ENCODE measurements at regions of chr2 and their contacts with region 1.

Region 1: GRCh38 chr2:222837511-222838056 is 23.3 kb upstream of the ACSL3 start:
- DNase-seq: peak; percentile 94
- H3K4me3 Mint-ChIP-seq: peak overlapping the region; percentile 73
- H3K27ac Mint-ChIP-seq: peak overlapping the region; percentile 93
- H3K4me1 Mint-ChIP-seq: peaks cover 39% of the 10 kb centered on the region
- H3K27me3 Mint-ChIP-seq: no peaks in the 10 kb centered on the region
- CTCF ChIP-seq: no peak

Region 2: GRCh38 chr2:222805541-222806304 is 31.9 kb before region 1 on chr2:
- CTCF ChIA-PET with region 1: interaction called, 4 read pairs
- POLR2A ChIA-PET with region 1: interaction called, 56 read pairs
- intact Hi-C with region 1: loop called (anchors 5 kb)
- DNase-seq: peak; percentile 89
- H3K4me3 Mint-ChIP-seq: peak overlapping the region; percentile 39
- H3K27ac Mint-ChIP-seq: peak overlapping the region; percentile 96
- H3K4me1 Mint-ChIP-seq: peaks cover 10% of the 10 kb centered on the region
- H3K27me3 Mint-ChIP-seq: no peaks in the 10 kb centered on the region
- CTCF ChIP-seq: no peak

Region 3: DNA sequence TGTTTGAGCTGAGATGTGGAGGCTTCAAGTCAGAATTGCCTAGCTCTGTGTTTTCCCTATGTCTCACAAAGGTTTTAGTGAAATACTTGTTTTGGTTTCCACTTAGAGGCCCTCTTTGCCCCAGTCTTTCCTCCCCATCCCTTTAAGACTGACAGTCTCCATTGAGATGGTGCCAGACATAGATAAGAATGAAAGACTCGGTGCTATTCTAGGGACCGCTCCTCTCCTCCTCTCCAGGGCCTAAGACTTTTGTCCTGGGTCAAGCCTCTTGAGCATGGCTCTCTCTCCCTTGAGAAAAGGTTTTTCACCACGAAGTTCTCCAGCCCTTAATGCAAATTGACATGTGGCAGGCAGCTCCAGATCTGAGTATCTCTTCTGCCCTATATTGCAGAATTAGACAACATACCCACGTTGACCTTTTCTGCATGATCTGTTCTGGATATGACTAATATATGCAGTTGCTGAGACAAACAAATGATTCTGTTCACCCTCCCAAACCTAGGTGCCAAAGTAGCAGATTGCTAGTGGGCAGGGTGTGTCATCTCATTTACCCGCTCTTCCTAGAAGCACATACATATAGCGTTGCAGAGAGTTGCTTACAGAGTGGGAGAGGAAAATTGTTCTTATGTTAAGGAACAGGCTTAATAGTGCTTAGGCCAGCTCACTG is 24.3 kb before region 1 on chr2:
- CTCF ChIA-PET with region 1: interaction called, 4 read pairs
- POLR2A ChIA-PET with region 1: interaction called, 56 read pairs
- intact Hi-C with region 1: loop called (anchors 5 kb)
- DNase-seq: peak; percentile 71
- H3K4me3 Mint-ChIP-seq: no peak overlapping the region
- H3K27ac Mint-ChIP-seq: peak overlapping the region; percentile 70
- H3K4me1 Mint-ChIP-seq: peaks cover 31% of the 10 kb centered on the region
- H3K27me3 Mint-ChIP-seq: no peaks in the 10 kb centered on the region
- CTCF ChIP-seq: no peak

Region 4: GRCh38 chr2:222827417-222827816 is 10.2 kb before region 1 on chr2:
- CTCF ChIA-PET with region 1: interaction called, 6 read pairs
- POLR2A ChIA-PET with region 1: interaction called, 32 read pairs
- intact Hi-C with region 1: no loop called
- DNase-seq: peak; percentile 55
- H3K4me3 Mint-ChIP-seq: no peak overlapping the region
- H3K27ac Mint-ChIP-seq: no peak overlapping the region
- H3K4me1 Mint-ChIP-seq: peaks cover 20% of the 10 kb centered on the region
- H3K27me3 Mint-ChIP-seq: no peaks in the 10 kb centered on the region
- CTCF ChIP-seq: no peak

Region 5: DNA sequence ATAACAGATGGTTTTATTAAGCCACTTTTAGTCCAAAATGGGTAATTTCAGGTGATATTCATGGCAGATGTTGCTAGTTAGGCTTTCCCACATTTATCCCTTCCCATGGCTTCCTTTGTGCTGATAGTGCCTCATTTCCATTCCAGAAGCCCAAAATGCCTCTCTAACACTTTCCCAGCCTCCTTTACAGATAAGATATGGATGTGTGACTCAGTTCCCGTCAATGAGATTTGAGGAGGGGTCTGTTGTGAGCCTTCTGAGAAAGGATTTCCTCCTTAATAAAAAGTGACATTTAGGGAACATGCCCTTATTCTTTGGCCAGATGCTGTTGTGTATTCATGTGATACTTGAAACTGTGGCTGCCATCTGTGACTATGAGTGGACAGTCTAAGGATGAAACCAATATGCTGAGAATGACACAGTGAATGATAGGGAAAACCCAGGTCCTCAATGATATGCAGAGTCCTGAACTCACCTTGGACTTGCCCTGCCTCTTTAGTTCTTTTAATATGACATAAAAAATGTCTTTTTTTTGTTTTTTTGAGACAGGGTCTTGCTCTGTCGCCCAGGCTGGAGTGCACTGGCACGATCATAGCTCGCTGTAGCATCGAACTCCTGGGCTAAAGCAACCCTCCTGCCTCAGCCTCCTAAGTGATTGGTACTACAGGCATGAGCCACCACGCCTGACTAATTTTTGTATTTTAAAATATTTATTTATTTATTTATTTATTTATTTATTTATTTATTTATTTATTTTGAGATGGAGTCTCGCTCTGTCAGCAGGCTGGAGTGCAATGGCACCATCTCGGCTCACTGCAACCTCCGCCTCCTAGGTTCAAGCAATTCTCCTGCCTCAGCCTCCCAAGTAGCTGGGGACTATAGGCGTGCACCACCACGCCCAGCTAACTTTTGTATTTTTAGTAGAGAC is 17.5 kb after region 1 on chr2:
- CTCF ChIA-PET with region 1: interaction called, 14 read pairs
- POLR2A ChIA-PET with region 1: interaction called, 205 read pairs
- intact Hi-C with region 1: no loop called
- DNase-seq: no peak
- H3K4me3 Mint-ChIP-seq: no peak overlapping the region
- H3K27ac Mint-ChIP-seq: no peak overlapping the region
- H3K4me1 Mint-ChIP-seq: peaks cover 5% of the 10 kb centered on the region
- H3K27me3 Mint-ChIP-seq: no peaks in the 10 kb centered on the region
- CTCF ChIP-seq: no peak

Region 6: GRCh38 chr2:222878877-222879603 is 41.5 kb after region 1 on chr2:
- CTCF ChIA-PET with region 1: interaction called, 3 read pairs
- POLR2A ChIA-PET with region 1: interaction called, 10 read pairs
- intact Hi-C with region 1: no loop called
- DNase-seq: peak; percentile 86
- H3K4me3 Mint-ChIP-seq: peak overlapping the region; percentile 39
- H3K27ac Mint-ChIP-seq: peak overlapping the region; percentile 74
- H3K4me1 Mint-ChIP-seq: peaks cover 45% of the 10 kb centered on the region
- H3K27me3 Mint-ChIP-seq: no peaks in the 10 kb centered on the region
- CTCF ChIP-seq: no peak